ENCODE measurements at regions of chr9 and their contacts with region 1.

Region 1: GRCh38 chr9:74609671-74610405 is 112.7 kb downstream of the RORB start:
- DNase-seq: no peak
- H3K4me3 ChIP-seq: no peak overlapping the region
- H3K27ac ChIP-seq: no peak overlapping the region
- H3K4me1 ChIP-seq: no peaks in the 10 kb centered on the region
- H3K27me3 ChIP-seq: no peaks in the 10 kb centered on the region
- CTCF ChIP-seq: no peak

Region 2: DNA sequence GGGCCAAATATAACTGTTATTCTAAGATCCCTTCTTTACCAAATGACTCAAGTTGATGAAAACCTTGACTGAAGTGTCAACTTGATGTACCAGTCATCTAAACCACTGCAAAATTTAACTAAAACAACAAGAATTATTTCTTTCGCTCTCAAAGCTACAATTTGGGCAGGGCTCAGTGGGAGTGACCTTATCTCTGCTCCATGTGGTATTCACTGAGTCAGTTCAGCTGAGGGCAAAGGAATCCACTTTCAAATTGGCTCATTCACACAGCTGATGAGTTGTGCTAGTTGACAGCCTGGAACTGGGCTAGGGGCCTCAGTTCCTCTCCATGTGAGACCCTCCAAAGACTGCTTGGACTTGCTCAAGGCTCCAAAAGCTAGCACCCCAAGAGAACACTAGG is 53.6 kb after region 1 on chr9:
- intact Hi-C with region 1: loop called (anchors 5 kb)
- DNase-seq: no peak
- H3K4me3 ChIP-seq: no peak overlapping the region
- H3K27ac ChIP-seq: no peak overlapping the region
- H3K4me1 ChIP-seq: no peaks in the 10 kb centered on the region
- H3K27me3 ChIP-seq: no peaks in the 10 kb centered on the region
- CTCF ChIP-seq: no peak

Measured in kidney (tissue), 22 donors.